GM13977 (cell line): ENCODE measurements at regions of chr1 and their contacts with region 1.

Region 1: DNA sequence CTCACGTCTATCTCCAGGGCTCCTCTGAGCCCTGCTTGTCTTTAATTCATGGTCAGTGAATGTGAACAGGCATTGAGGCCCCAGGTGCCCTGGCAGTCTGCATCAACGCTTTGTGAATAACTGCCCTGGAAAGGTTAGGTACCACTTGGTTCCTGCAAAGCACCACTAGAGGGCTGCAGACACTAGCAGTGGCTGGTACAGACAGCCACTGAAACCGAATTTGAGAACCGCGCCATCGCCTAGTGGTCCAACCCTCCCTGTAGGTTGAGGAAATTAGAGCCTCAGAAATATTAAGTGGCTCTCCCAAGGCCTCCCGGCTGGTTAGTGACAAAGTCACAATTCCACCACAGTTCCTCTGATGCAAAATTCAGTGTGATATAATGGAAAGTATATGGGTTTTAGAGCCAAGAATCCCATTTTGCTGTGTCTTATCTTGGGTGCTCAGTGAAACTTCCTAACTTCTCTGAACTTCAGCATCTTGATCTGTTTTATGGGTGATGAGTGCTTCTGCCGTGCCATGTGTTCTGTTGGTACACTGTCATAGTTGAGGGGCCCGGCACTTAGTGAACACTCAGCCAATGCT is 46.2 kb upstream of the BCL9 start:
- DNase-seq: peak; percentile 71
- CTCF ChIP-seq: peak; percentile 95

Region 2: GRCh38 chr1:147882535-147882934 is 387.4 kb after region 1 on chr1:
- in situ Hi-C with region 1: loop called (anchors 10 kb)
- DNase-seq: no peak
- CTCF ChIP-seq: no peak